ENCODE measurements at regions of chr1 and their contacts with region 1.

Region 1: DNA sequence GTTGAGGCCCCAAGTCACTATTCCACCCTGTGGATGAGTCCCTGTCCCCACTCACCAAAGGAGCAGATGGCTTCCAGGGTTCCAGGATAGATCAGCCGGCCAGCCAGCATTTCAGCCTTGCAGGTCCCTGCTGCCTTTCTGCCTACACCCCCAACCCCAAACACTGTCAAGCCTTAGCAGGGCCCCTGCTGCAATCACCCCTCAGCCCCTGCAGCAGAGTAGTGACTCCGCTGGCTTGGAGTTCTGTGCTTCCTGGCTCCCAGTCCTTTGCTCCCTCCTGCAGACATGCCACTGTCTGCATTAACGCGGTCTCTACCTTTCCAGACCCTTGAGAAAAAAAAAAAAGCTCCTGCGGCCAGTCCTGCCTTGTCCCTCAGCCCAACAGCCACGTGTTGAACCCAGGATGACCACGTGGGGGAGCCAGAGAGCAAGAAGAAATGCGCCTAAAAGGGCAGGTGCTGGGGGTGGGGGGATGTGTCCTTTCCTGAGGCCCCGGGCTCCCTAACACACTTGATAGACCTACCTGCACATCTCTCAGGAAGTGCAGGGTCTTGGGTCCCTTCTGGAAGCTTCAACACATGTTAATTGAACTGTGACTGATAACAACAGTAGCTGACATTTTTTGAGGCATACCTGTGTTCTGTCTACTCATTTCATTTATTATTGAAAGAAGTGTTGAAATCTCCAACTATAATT is 37.4 kb downstream of the RASSF5 start:
- DNase-seq: peak; percentile 87
- ATAC-seq: peak; percentile 91
- H3K4me3 Mint-ChIP-seq: no peak overlapping the region
- H3K27ac Mint-ChIP-seq: peak overlapping the region; percentile 57
- H3K4me1 Mint-ChIP-seq: peaks cover 25% of the 10 kb centered on the region
- H3K27me3 Mint-ChIP-seq: no peaks in the 10 kb centered on the region
- CTCF ChIP-seq: peak; percentile 94

Region 2: DNA sequence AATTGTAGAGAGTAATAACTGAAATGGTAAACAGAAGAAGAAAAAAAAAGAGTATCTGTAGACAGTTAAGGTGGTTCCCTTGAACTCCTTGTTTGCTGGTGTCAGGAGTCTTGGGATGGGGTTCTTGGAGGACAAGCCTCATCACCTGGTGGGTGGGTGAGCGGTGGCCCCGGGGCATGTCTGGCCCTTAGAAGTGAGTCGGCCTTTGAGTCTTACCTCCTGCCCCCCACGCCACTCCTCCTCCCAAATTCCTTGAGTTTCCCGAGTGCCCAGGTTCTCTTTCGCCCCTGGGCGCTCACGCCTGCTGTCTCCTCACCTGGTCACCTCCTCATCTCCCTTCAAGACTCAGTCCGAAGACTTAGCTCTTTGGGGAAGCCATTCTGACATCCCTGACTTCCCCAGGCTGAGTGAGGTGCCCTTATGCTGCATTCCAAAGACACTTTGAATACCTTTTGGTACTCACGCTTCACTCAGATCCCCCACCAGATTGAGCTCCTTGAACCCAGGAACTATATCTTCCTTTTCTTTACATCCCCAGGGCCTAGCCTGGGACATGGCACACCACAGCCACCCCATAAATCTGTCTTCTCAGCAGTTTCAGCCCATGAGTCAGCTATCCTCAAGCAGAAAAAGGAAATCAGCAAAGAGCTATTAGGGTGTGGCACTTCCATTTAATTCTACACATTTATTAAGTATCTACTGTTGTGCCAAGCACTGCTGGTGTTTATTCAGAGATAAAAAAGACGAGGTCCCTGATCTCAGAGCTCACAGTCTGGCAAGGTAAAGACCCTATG is 87.9 kb before region 1 on chr1:
- CTCF ChIA-PET with region 1: no interaction called
- POLR2A ChIA-PET with region 1: no interaction called
- intact Hi-C with region 1: no loop called
- DNase-seq: no peak
- ATAC-seq: no peak
- H3K4me3 Mint-ChIP-seq: no peak overlapping the region
- H3K27ac Mint-ChIP-seq: no peak overlapping the region
- H3K4me1 Mint-ChIP-seq: no peaks in the 10 kb centered on the region
- H3K27me3 Mint-ChIP-seq: no peaks in the 10 kb centered on the region
- CTCF ChIP-seq: no peak

Region 3: DNA sequence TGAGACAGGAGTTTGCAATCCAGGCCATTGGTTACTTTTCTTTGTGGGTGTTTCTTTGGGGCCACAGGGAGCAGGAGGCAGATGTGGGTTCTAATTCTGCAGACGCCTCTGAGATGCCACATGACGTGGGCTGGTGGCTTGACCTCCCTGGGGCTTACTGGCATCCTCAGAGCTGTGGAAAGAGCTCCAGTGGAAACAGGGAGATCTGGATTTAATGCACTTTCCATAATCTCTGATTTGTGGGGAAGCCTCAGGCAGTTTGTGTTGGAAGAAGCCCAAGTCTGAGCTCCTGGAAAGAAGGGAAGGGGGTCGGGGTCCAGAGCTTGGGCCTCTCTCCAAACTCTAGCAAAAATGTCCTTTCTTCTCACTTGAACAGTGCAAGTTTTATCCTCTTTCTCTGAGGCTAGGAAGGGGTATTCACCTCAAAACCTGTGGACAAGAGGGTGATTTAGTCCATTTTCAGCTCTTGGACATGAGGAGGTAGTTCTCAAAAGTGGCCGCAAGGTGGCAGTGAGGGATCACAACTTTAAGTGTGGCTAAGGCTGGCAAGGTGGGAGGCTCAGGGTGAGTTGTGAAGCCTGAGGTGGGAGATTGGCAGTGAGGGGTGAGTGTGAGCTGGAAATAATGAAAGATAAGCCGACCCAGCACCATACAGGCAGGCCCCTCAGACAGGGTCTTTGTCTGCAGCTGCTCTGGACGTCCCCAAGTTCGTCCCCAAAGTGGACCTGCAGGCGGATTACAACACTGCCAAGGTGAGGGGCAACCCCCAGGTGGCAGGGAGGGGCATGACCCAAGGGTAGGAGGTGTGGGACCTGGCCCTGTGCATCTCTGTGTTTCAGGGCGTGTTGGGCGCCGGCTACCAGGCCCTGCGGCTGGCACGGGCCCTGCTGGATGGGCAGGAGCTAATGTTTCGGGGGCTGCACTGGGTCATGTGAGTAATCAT is 65.3 kb before region 1 on chr1:
- CTCF ChIA-PET with region 1: interaction called, 15 read pairs
- POLR2A ChIA-PET with region 1: no interaction called
- intact Hi-C with region 1: no loop called
- DNase-seq: peak; percentile 91
- ATAC-seq: peak; percentile 87
- H3K4me3 Mint-ChIP-seq: no peak overlapping the region
- H3K27ac Mint-ChIP-seq: peak overlapping the region; percentile 60
- H3K4me1 Mint-ChIP-seq: peaks cover 33% of the 10 kb centered on the region
- H3K27me3 Mint-ChIP-seq: no peaks in the 10 kb centered on the region
- CTCF ChIP-seq: peak; percentile 79

Region 4: DNA sequence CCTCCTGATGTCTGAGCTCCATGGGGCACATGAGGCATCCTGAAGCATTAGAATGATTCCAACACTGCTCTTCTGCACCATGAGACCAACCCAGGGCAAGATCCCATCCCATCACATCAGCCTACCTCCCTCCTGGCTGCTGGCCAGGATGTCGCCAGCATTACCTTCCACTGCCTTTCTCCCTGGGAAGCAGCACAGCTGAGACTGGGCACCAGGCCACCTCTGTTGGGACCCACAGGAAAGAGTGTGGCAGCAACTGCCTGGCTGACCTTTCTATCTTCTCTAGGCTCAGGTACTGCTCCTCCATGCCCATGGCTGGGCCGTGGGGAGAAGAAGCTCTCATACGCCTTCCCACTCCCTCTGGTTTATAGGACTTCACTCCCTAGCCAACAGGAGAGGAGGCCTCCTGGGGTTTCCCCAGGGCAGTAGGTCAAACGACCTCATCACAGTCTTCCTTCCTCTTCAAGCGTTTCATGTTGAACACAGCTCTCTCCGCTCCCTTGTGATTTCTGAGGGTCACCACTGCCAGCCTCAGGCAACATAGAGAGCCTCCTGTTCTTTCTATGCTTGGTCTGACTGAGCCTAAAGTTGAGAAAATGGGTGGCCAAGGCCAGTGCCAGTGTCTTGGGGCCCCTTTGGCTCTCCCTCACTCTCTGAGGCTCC is 48.4 kb before region 1 on chr1:
- CTCF ChIA-PET with region 1: interaction called, 14 read pairs
- POLR2A ChIA-PET with region 1: interaction called, 3 read pairs
- intact Hi-C with region 1: no loop called
- DNase-seq: no peak
- ATAC-seq: peak; percentile 32
- H3K4me3 Mint-ChIP-seq: no peak overlapping the region
- H3K27ac Mint-ChIP-seq: peak overlapping the region; percentile 79
- H3K4me1 Mint-ChIP-seq: peaks cover 14% of the 10 kb centered on the region
- H3K27me3 Mint-ChIP-seq: no peaks in the 10 kb centered on the region
- CTCF ChIP-seq: no peak

Region 5: DNA sequence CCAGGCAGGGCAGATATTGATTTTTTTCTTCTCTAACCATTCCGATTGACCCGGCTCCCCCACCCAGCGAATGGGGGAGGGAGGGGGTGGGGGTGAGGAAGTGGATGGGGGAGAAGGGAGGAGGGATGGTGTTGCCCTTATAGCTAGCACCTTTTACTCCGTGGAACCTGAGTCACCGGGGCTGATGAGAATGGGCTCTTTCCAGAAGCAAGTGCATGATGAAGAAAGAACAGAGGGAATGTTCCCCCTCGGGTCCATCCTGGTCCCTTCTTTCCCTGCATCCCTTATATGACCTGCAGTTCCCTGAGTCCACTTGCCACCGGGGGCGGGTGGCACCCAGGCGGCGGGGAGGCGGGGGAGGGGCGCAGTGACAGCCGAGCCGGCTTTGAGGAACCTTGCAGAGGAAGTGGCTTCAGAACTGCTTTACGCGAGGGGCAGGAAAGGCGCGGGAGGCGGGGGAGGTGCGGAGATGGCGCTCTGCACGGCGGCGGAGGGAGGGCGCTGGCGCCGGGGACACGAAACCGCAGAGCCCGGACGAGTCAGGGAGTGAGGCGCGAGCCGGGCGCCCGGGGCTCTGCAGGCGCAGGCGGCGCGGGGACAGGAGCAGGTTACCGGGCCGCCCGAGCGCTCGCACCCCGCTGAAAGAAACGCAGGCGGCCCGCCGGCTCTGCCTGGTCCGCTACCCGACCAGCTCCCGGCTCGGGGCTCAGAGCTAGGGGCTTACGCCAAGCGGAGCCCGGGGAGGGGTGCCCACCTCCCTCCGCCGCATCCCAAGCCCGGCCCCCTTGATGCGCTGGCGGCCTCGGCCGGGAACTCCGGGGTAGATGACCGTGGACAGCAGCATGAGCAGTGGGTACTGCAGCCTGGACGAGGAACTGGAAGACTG is 12.3 kb after region 1 on chr1:
- CTCF ChIA-PET with region 1: interaction called, 88 read pairs
- POLR2A ChIA-PET with region 1: interaction called, 1,021 read pairs
- intact Hi-C with region 1: no loop called
- DNase-seq: peak; percentile 95
- ATAC-seq: peak; percentile 51
- H3K4me3 Mint-ChIP-seq: peak overlapping the region; percentile 96
- H3K27ac Mint-ChIP-seq: peak overlapping the region; percentile 100
- H3K4me1 Mint-ChIP-seq: peaks cover 59% of the 10 kb centered on the region
- H3K27me3 Mint-ChIP-seq: no peaks in the 10 kb centered on the region
- CTCF ChIP-seq: no peak

Region 6: DNA sequence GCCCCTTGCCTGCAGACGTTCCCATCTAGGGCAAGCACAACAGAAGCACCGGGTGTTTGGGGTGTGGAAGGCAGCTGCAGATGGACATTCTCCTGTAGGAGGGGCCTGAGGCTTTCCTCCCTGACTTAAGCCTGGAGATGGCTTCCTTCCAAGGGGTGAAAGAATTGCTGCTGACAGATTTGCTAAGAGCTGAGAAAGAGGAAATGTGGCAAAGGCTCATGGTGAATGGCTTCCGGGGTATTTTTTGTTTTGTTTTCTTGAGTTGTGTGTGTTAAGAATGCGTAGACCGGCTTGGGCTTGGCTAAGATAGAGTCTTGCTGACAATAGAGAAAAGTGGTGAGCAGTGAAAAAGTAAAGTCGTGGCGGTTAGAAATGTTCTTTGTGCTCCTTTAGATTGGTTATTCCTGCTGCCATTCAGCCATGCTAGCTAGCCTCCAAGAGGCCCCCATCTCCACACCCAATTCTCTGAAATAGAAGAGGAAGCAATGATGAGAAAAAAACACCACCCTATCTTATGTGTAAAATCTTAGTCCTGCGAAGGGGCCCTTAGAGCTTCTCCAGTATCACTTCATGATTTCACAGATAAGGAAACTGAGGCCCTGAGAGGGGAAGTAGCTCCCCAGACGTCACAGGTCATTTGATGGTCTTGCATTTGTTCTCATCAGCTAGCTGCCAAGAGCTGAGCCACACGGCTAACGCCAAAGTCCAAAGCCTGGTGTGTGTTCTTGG is 30.6 kb after region 1 on chr1:
- CTCF ChIA-PET with region 1: interaction called, 583 read pairs
- POLR2A ChIA-PET with region 1: interaction called, 1,021 read pairs
- intact Hi-C with region 1: no loop called
- DNase-seq: peak; percentile 70
- ATAC-seq: peak; percentile 42
- H3K4me3 Mint-ChIP-seq: peak overlapping the region; percentile 70
- H3K27ac Mint-ChIP-seq: peak overlapping the region; percentile 100
- H3K4me1 Mint-ChIP-seq: peaks cover 93% of the 10 kb centered on the region
- H3K27me3 Mint-ChIP-seq: no peaks in the 10 kb centered on the region
- CTCF ChIP-seq: no peak

Region 7: GRCh38 chr1:206612129-206612876 is 67.6 kb after region 1 on chr1 and contains the start of gene EIF2D:
- CTCF ChIA-PET with region 1: interaction called, 14 read pairs
- POLR2A ChIA-PET with region 1: interaction called, 3 read pairs
- intact Hi-C with region 1: no loop called
- DNase-seq: peak; percentile 95
- ATAC-seq: peak; percentile 96
- H3K4me3 Mint-ChIP-seq: peak within 1 kb of the TSS; percentile 91
- H3K27ac Mint-ChIP-seq: peak within 1 kb of the TSS; percentile 92
- H3K4me1 Mint-ChIP-seq: peaks cover 39% of the 10 kb centered on the region
- H3K27me3 Mint-ChIP-seq: no peaks in the 10 kb centered on the region
- CTCF ChIP-seq: peak; percentile 89
- total RNA-seq, gene EIF2D: 100 to 102 TPM

Region 8: GRCh38 chr1:206705191-206705590 is 160.5 kb after region 1 on chr1:
- CTCF ChIA-PET with region 1: no interaction called
- POLR2A ChIA-PET with region 1: no interaction called
- intact Hi-C with region 1: no loop called
- DNase-seq: no peak
- ATAC-seq: no peak
- H3K4me3 Mint-ChIP-seq: no peak overlapping the region
- H3K27ac Mint-ChIP-seq: no peak overlapping the region
- H3K4me1 Mint-ChIP-seq: peaks cover 86% of the 10 kb centered on the region
- H3K27me3 Mint-ChIP-seq: no peaks in the 10 kb centered on the region
- CTCF ChIP-seq: no peak